Mammary epithelial cell (primary cell): ENCODE measurements at regions of chr15 and their contacts with region 1.

Region 1: DNA sequence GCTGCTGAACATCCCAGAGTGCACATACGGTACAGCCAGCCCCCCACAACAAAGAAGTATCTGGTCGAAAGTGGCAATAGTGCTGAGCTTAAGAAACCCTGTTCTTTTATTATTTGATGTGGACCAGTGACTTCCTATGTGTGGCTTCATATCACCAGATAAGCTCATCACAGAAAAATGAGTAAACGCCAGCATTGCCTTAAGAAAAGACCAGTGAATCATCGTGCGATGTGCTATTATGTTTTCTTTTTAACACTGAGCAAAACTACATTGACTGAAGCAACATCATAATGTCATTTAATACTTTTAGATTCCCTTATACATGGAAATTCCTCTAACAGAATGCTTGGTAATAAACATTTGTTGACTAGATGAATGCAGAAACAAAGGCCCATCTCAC is 45.2 kb upstream of the ARRDC4 start:
- DNase-seq: no peak
- H3K4me3 ChIP-seq: no peak overlapping the region
- H3K27ac ChIP-seq: no peak overlapping the region
- H3K4me1 ChIP-seq: no peaks in the 10 kb centered on the region
- H3K27me3 ChIP-seq: peaks cover 3% of the 10 kb centered on the region
- CTCF ChIP-seq: no peak

Region 2: DNA sequence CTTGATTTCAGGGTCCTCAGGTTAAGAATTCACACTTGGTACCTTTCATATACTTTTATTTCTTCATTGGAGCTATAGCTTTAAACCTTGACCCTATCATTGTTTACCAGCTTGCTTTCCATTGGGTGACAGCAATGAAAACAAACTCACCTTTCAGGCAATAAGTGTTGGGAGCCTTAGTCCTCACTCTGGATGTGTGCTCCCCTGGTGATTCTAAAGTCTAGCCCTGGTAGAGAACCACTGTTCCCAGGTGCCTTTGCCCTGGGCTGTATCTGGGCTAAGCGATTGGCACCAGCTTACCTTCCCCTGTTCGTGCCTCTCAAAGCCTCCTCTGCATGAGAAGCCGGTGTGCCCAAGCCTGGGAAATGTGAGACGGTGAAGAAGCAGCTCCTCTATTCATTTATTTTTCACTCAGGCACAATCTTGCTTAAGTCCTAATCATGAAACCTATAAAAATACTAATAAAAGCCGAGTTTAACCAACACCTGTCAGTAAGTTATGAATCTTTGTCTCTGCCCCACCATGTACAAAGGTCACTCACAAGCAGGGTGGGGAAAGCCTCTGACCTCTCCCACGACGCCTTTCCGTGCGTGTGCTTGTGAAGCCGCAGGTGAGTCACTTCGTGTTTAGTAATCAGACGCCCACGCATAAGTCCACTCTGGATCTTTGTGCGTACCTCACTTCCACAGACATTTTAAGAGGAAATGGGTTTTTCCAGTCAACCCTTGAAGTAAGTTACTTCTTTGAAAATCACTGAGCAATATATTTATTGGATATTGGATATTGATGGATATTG is 32.4 kb after region 1 on chr15:
- CTCF ChIA-PET with region 1: no interaction called
- dilution Hi-C with region 1: loop called (anchors 5 kb)
- in situ Hi-C with region 1: no loop called
- intact Hi-C with region 1: no loop called
- DNase-seq: peak; percentile 42
- H3K4me3 ChIP-seq: no peak overlapping the region
- H3K27ac ChIP-seq: no peak overlapping the region
- H3K4me1 ChIP-seq: no peaks in the 10 kb centered on the region
- H3K27me3 ChIP-seq: no peaks in the 10 kb centered on the region
- CTCF ChIP-seq: no peak